AG04450 (cell line): ENCODE measurements at regions of chr2 and their contacts with region 1.

Region 1: DNA sequence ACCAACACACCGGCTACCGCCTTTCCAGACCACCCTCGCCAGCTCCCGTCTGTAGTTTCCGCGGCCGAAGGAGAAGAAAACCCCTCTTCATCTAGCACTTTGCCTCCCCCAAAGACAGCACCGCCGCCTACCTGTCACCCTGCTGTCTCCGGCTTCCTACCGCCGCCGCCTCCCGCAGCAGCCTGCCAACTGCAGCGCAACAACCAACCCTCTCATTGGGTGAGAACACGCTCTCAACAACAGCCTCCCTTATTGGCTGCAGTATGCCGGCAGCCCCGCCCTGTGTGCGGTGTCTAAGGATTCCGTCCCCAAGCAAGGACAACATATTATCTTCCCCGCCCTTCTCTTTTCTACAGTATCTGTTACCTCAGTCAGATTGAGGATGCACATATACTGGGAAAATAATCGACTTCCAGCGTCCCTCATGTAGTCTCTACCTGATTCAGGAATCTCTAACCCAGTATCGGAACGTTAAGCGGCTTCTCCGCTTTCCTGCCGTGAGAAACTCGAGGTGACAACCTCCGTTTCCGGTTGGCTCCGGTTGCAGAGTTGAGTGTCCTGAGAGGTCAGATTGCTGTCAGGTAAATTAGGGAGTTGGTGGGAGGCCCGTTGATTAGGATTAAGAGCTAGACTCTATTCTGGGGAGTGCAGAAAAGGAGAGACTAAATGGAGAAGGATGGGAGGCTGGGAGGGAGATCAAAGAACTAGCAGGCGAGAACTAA is at the starts of genes HYCC2 and NDUFB3:
- DNase-seq: peak; percentile 84
- H3K4me3 ChIP-seq: peak within 1 kb of the TSS; percentile 99
- H3K27ac ChIP-seq: peak within 1 kb of the TSS; percentile 35
- H3K27me3 ChIP-seq: no peaks in the 10 kb centered on the region
- CTCF ChIP-seq: peak; percentile 41
- polyA plus RNA-seq, gene HYCC2: 4.5 and 6.1 TPM in 2 replicates
- polyA plus RNA-seq, gene NDUFB3: 90.9 and 121 TPM in 2 replicates

Region 2: DNA sequence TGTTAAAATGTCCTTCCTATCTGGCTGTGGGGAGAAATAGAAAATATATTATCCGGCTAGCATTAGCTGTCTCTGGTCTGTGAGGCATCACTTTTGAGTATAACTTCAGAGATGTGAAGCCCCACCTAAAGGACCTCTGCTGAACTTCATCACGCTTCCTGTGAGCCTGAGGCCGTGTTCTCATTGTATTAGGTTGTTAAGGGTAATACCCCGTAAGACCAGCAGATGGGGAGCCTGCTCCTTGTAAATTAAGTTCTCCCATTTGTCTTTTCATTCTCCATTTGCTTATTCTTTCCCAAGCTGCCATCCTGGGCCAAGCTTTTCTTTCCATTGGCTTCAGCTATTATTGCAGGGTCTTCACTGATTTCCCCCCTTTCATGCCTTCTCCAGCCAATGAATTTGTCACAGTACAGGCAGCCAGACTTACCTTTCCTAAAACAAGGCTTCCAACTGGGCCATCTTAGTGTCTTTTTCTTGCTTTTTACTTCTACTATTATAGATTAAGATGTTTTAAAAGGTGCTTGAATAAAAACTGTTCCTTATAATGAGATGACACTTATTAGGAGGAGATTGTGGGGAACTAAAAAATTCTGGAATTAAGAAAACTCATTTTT is 170.1 kb before region 1 on chr2:
- CTCF ChIA-PET with region 1: interaction called, 125 read pairs
- POLR2A ChIA-PET with region 1: no interaction called
- DNase-seq: peak; percentile 81
- H3K4me3 ChIP-seq: no peak overlapping the region
- H3K27ac ChIP-seq: no peak overlapping the region
- H3K27me3 ChIP-seq: no peaks in the 10 kb centered on the region
- CTCF ChIP-seq: peak; percentile 84

Region 3: GRCh38 chr2:201049455-201049854 is 22.2 kb before region 1 on chr2:
- CTCF ChIA-PET with region 1: interaction called, 12 read pairs
- POLR2A ChIA-PET with region 1: no interaction called
- DNase-seq: no peak
- H3K4me3 ChIP-seq: no peak overlapping the region
- H3K27ac ChIP-seq: no peak overlapping the region
- H3K27me3 ChIP-seq: no peaks in the 10 kb centered on the region
- CTCF ChIP-seq: no peak

Region 4: DNA sequence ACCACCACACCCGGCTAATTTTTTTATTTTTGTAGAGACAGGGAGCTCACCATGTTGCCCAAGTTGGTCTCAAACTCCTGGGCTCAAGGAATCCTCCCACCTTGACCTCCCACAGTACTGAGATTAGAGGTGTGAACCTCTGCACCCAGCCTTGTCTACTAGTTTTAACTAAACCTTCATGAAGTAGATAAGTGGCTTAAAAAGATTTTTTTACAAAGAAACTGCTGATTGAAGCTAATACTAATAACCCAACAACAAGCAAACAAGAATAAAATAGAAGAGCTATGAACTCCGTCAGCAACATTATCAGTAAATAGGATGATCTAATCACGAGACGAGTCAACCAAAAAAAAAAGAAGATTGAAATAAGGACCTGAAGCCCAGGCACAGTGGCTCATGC is 18.9 kb after region 1 on chr2:
- CTCF ChIA-PET with region 1: interaction called, 10 read pairs
- POLR2A ChIA-PET with region 1: no interaction called
- DNase-seq: no peak
- H3K4me3 ChIP-seq: no peak overlapping the region
- H3K27ac ChIP-seq: no peak overlapping the region
- H3K27me3 ChIP-seq: no peaks in the 10 kb centered on the region
- CTCF ChIP-seq: no peak

Region 5: DNA sequence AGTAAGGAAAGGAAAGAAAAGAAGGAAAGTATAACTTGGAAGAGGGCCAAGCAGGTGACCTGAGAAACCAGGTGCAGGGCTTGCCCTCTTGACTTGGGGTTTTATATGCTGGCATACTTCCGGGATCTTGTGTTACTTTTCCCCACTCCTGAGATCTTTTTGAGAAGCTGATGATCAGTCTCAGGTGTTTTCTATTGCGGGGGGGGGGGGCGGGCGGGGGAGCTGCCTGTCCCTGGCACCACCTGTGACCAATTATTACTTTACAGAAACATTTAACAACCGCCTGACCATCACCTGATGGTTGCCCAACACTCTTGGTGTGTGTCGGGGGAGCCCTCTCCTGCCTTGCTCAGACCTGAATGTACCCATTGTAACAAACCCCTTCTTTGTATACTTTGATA is 104.4 kb after region 1 on chr2:
- CTCF ChIA-PET with region 1: interaction called, 18 read pairs
- POLR2A ChIA-PET with region 1: no interaction called
- DNase-seq: no peak
- H3K4me3 ChIP-seq: no peak overlapping the region
- H3K27ac ChIP-seq: no peak overlapping the region
- H3K27me3 ChIP-seq: no peaks in the 10 kb centered on the region
- CTCF ChIP-seq: no peak